Dorsolateral prefrontal cortex (tissue), 120 donors: ENCODE measurements at regions of chr11 and their contacts with region 1.

Region 1: GRCh38 chr11:120929664-120930154 is 94.2 kb upstream of the TBCEL start:
- DNase-seq: peak in 1 of 10 donors; percentile 43
- H3K4me3 ChIP-seq: no peak overlapping the region
- H3K27ac ChIP-seq: peak overlapping the region in 6 of 59 donors; percentile 1 to 46 (median 24)
- H3K27me3 ChIP-seq: no peaks in the 10 kb centered on the region
- CTCF ChIP-seq: peak in 55 of 56 donors; percentile 18 to 76 (median 61)

Region 2: DNA sequence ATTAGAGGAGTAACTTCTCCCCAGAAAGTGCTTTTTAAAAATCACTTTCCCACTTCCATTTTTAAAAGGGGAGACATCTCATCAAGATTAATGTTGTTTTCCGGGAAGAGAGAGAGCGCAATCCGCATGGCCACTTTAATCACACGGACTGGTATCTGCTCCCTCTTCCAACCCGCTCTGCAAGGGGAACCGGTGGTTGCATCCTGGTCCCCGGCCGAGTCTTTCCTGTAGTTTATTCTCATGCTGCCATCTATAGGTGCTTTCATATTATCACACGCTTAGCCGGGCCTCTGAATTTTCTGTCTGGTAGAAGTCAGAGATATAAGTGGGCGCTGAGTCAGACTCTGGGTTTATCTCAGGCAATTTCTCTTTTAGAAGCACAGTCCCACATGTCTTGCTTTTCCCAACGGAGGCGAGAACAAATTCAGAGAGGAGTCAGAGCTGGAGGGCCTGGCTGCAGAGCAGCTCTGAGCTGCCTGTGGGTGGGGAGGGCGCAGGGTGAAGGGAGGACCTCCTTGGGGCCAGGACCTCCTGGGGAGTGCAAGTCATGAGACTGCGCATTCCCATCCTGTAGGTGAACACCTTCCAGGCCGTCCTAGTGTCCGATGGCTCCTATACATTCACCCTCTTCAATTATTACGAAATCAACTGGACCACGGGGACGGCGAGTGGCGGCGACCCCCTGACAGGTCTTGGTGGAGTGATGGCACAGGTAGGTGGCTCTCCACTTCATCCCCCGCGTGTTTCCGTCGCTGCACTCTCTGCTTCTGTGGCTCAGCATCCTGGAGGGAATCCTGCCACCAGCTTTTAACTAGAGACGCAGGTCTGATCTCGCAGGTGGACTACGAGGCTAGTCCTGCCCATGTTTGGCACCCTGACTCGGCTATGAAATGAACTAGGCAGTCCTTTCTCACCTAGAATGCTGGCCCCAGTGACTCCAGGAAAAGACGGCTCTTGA is 183.1 kb after region 1 on chr11:
- intact Hi-C with region 1: loop called in 1 of 2 experiments (anchors 5 kb)
- DNase-seq: peak; percentile 40 to 86 (median 72)
- H3K4me3 ChIP-seq: peak overlapping the region in 2 of 59 donors; percentile 22 to 24
- H3K27ac ChIP-seq: no peak overlapping the region
- H3K27me3 ChIP-seq: no peaks in the 10 kb centered on the region
- CTCF ChIP-seq: peak; percentile 22 to 85 (median 69)